Cardiac septum (tissue), 1 donor: ENCODE measurements at regions of chr19 and their contacts with region 1.

Region 1: GRCh38 chr19:6021878-6022569 is 44.1 kb upstream of the RANBP3 start:
- DNase-seq: peak; percentile 83

Region 2: DNA sequence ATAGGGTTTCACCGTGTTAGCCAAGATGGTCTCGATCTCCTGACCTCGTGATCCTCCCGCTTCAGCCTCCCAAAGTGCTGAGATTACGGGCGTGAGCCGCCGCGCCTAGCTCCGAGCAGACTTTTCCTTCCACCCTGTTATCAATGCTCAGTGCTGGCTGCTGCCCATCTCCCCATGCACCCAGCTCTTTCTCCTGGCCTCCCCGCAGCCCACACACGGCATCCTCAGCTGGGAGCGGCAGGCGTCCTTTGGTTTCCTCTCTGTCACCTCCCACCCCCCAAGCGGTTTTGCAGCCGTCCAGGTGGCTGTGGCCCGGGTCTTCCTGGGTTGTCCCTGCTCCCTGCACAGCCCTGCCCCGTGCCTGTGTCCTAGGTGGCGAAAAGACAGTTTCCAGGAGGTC is 249.6 kb before region 1 on chr19:
- intact Hi-C with region 1: loop called (anchors 2 kb)
- DNase-seq: no peak

Region 3: DNA sequence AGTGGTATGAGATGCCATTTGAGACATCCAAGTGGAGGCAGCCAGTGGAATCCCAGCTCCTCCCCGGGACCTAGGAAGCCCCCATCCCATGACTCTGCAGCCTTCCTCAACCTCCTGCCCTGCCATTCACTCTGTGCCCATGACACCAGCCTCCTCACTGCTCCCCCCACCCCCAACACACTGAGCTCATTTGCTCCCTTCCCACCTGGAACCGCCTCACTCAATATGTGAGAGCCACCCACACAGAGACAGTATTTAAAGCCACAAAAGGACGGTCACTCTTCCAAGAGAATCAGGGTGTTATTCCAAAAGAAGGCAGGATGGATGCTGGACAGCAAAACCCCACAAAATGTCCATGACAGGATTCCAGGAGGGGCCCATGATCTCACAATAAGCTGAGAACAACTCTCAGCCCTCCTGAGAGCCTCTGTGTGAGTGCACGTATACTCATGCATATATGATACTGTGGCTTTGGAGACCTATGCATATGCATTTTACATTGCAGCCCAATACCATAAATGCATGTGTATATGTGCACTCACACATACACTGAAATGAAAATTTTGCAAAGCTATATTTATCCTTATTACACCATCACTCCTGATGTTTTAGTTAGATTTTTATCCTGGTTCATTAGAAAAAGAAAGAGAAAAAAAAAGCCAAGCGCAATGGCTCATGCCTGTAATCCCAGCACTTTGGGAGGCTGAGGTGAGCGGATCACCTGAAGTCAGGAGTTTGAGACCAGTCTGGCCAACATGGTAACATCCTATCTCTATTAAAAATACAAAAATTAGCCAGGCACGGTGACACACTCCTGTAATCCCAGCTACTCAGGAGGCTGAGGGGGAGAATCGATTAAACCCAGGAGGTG is 33.3 kb before region 1 on chr19:
- intact Hi-C with region 1: loop called (anchors 1 kb)
- DNase-seq: no peak